Left ventricle myocardium superior (tissue), 1 donor: ENCODE measurements at regions of chr3 and their contacts with region 1.

Region 1: DNA sequence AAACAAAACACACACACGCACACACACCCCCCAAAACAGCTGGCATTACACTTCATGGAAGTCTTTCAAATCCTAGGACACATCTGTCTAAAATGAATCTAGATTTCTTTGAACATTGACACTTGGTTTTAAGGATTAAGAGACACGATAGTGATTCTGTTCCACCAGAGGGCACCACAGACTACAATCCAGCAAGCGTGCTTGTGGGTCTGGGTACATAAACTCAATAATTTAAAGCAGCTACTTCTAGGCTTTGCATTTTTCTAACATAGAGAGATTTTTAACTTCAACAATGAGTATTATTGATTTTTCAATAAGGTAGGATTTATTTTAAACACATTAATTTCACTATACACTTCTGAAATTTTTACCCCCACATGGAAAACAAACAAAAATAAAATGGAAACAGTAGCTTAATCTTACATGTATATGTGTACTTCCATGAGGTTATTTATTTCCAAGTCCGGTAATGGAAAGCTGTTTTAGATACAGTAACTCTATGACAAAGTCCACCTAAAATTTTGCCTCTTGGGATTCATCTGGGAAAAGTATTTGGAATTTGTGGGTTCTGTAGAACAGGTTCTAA is 564.0 kb upstream of the TGFBR2 start:
- DNase-seq: peak; percentile 29
- ATAC-seq: peak; percentile 73

Region 2: DNA sequence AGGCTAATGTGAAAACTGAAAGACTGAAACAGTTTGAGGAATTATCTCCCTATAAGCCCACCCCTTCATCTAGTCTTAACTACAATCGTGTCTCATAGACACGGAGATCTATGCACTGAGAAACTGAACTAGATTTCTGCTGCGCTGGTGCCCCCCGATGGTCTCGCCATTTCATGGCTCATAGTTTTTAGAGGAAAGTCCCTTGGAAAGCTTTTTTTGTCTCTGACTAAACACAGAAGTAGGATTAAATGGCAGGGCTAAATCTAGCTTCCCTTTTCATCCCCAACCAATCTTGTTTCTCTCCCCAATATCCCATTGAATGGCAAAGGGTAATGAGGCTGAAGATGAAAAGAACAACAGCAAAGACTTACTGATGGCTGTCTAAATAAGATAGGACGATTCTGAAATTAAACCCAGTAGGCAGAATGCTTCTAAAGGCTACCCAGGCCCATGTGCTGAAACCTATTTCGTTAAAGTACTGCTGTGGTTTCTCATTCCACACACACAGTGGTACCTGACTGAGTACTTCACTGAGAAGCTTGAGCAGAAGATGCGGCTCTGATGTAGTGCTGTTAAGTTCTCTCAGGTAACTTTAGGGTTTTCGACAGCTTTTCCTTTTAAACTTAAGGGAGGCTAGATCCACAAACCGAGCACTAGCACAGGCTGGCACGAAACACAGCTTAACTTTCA is 709.4 kb after region 1 on chr3:
- intact Hi-C with region 1: loop called (anchors 5 kb)
- DNase-seq: peak; percentile 57
- ATAC-seq: peak; percentile 65